ENCODE measurements at regions of chr18 and their contacts with region 1.

Region 1: DNA sequence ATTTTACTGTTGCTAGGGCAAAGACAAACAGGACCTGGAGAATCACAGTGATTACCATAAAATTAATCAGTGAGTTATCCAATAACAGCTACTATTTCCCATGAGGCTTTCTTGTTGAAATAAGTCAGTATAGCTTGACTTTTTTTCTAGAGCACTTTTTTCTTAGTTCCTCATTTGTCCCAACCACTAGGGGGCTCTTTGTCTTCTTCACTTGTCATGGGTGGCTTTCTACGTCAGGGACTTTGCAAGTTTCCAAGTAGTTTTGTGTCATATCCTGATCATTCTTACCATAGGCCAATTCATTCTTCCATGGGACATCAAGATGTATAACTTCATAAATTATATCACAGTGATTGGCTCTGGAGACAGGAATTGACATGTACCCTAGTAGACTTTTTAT is 1019.6 kb upstream of the PIK3C3 start:
- DNase-seq: no peak
- ATAC-seq: no peak
- H3K4me3 ChIP-seq: no peak overlapping the region
- H3K4me3 Mint-ChIP-seq: no peak overlapping the region
- H3K27ac ChIP-seq: no peak overlapping the region
- H3K27ac Mint-ChIP-seq: no peak overlapping the region
- H3K4me1 ChIP-seq: no peaks in the 10 kb centered on the region
- H3K4me1 Mint-ChIP-seq: no peaks in the 10 kb centered on the region
- H3K27me3 ChIP-seq: no peaks in the 10 kb centered on the region
- H3K27me3 Mint-ChIP-seq: no peaks in the 10 kb centered on the region
- CTCF ChIP-seq: no peak

Region 2: DNA sequence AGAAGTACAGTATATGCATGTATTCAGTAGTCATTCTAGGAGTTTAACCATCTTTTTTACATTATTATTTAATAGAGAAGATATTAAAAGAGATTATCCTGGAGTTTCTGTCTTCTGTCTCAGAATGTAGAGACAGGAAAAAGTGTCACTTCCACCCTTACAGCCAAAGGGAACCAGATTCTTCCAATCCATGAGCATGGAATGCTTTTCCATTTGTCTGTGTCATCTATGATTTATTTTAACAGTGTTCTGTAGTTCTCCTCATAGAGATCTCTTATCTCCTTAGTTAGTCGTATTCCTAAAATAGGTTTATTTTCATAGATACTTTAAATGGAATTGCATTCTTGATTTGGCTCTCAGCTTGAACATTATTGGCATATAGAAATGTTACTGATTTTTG is 60.1 kb after region 1 on chr18:
- CTCF ChIA-PET with region 1: no interaction called
- POLR2A ChIA-PET with region 1: no interaction called
- intact Hi-C with region 1: loop called in 1 of 2 experiments (anchors 10 kb)
- DNase-seq: no peak
- ATAC-seq: no peak
- H3K4me3 ChIP-seq: no peak overlapping the region
- H3K4me3 Mint-ChIP-seq: no peak overlapping the region
- H3K27ac ChIP-seq: no peak overlapping the region
- H3K27ac Mint-ChIP-seq: no peak overlapping the region
- H3K4me1 ChIP-seq: no peaks in the 10 kb centered on the region
- H3K4me1 Mint-ChIP-seq: no peaks in the 10 kb centered on the region
- H3K27me3 ChIP-seq: no peaks in the 10 kb centered on the region
- H3K27me3 Mint-ChIP-seq: no peaks in the 10 kb centered on the region
- CTCF ChIP-seq: no peak

Measured in CD8-positive, alpha-beta T cell (primary cell).